ENCODE measurements at regions of chr19 and their contacts with region 1.

Region 1: DNA sequence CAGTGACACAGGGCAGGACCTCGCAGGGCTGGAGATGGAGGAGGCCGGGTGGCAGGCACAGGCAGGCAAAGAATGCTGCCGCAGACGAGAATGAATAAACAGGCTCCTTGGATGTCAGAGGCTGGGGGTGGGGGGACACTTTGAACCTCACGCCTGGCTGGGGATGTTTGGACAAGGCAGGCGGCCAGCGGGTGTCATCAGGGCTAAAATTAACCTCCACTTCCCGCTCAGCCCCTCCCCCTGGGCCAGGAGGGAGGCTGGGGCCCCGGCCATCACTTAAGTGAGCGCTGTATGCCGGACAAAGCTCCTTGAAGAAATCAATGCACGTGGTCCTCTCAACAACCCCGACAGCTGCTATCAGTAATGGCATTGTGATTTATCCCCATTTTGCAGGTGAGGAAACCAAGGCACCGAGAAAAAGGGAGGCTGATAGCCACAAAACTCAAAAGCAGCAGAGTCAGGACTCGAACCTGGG is 10.3 kb upstream of the FUT5 start:
- DNase-seq: peak; percentile 67 to 89 (median 87)
- ATAC-seq: peak; percentile 81 to 88
- H3K4me3 ChIP-seq: no peak overlapping the region
- H3K27ac ChIP-seq: no peak overlapping the region
- H3K4me1 ChIP-seq: no peaks in the 10 kb centered on the region
- H3K27me3 ChIP-seq: no peaks in the 10 kb centered on the region

Region 2: DNA sequence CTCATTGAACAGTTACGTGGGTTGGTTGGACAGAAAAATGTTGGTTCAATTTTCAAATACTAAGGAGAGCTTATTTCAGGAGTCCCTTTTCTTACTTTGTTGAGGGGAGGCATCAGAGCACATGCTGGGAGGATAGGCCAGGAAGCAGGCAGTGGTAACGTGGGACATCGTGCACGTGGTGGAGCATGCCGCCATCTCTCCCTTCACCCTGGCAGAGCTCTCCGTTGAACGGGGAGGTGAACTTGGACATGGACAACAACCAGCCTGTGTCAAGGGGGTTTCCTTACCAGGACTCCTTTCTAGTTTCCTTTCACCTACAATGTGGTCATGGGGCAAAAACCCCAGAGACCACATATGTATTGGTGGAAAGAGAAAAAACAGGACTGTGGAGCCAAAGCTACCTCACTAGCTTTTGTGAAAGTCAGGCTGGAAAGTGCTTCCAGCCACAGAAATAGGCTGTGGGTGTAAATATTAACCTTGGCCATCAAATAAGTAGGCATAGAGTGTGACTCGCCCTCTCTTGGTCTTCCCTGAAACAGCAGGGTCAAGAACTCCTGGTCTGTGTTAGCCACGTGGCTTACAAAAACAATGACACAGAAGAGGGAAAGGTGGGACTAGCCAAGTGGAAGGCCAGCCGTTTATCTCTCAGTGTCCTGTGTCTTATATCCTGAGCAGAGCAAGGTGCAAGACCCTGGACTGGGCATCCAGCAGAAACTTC is 214.7 kb before region 1 on chr19:
- intact Hi-C with region 1: no loop called
- DNase-seq: no peak
- ATAC-seq: no peak
- H3K4me3 ChIP-seq: no peak overlapping the region
- H3K27ac ChIP-seq: no peak overlapping the region
- H3K4me1 ChIP-seq: no peaks in the 10 kb centered on the region
- H3K27me3 ChIP-seq: no peaks in the 10 kb centered on the region

Region 3: DNA sequence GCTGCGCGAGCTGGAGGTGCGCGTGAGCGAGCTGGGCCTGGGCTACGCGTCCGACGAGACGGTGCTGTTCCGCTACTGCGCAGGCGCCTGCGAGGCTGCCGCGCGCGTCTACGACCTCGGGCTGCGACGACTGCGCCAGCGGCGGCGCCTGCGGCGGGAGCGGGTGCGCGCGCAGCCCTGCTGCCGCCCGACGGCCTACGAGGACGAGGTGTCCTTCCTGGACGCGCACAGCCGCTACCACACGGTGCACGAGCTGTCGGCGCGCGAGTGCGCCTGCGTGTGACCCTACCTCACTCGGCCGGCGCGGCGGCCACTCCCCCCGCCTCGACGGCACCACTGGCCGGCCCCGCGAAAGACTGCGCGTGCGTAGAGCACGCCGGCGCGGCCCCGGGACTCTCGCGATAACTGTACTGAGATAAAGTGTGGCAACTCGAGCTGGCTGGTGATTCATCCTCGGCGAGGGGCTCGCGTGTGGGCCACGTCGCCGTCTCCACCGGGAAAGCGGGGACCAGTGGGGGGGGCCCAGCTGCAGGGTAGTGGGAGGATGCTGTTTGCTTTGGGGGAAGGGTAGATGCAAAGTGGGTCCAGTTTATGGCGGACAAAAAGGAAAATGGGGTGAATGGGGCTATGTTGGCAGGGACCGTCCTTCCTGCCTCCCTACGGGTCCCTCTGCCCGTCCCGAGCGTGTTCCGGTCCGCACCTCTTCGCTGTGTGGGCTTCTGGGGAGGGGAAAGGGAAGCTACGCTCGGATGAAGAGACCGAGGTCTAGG is 52.6 kb before region 1 on chr19:
- intact Hi-C with region 1: loop called in 2 of 4 experiments (anchors 10 kb)
- DNase-seq: peak; percentile 90 to 96 (median 95)
- ATAC-seq: peak; percentile 80 to 83
- H3K4me3 ChIP-seq: peak overlapping the region; percentile 24
- H3K27ac ChIP-seq: peak overlapping the region; percentile 42
- H3K4me1 ChIP-seq: peaks cover 2% of the 10 kb centered on the region
- H3K27me3 ChIP-seq: no peaks in the 10 kb centered on the region